Common myeloid progenitor, CD34-positive (primary cell): ENCODE measurements at regions of chr22 and their contacts with region 1.

Region 1: DNA sequence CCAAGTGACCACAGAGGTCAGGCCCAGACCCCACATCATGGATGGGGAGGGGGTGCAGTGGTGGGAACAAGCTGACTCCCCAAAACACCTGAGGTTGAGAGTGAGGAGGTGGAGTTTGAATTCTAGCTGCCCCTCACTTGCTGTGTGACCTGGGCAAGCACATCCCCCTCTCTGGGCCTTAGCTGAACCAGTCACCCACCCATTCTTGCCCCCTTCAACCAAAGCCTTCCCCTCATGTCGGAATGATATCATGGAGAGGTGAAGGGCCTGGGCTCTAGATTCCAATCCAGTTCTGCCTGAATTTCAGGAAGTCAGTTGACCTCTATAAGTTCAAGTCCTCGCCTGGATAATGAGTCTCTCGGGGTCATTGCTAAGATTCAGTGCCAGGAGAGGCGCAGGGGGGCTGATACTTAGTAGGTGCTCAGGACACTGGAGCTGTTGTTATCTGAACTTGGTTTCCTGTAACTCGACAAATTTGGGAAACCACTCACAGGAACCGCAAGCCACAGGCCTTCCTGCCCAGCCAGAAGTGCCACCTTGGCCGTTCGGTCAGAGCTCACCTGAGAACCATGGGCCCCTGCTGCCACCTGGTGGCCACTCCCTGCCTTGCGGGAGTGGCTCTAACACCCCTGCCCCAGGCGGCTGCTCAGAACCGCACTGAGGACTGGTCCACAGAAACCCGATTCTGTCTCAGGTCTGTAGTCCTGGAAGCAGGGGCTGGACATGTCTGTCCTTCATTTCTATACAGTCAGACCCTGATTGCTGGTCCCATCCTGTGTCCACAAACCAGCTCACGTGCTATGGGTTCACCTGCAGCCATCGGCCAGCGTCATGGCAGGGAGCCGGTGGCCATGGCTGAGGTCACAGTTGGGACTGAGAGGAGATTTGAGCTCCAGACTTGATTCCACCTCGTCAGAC is 6.9 kb downstream of the CDC42EP1 start:
- DNase-seq: peak; percentile 90 to 94 (median 93)
- H3K4me3 ChIP-seq: peak overlapping the region in 1 of 7 experiments; percentile 22
- H3K27ac ChIP-seq: no peak overlapping the region
- H3K4me1 ChIP-seq: peaks cover 5 to 28% (median 19%) of the 10 kb centered on the region in 4 experiments
- H3K27me3 ChIP-seq: peaks cover 0 to 32% (median 12%) of the 10 kb centered on the region in 5 experiments

Region 2: DNA sequence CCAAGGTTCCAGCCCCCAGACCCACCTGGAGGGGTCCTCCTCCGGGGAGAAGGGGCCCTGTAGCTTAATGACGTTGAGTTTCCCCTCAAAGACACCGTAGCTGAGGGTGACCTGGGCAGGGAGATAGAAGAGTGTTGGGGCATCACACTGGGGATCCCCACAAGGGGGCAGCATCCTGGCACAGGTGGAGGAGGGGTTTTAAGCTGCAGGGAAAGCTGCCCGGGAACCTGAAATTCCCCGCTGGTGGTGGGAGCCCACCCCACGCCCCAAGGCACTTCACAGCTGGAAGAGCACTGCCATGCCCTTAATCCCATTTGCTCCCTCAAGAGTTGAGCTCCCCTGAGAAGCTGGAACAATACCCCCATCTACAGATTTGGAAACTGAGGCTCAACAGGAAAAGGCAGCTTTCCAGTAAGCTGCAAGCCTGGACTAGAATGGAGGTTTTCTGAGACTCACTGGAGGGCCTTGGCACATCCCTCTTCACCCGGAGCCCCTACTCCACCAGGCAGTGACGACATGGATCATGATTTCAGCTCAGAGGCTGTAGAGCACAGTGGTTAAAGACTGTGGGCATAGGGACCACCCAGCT is 94.7 kb before region 1 on chr22:
- CTCF ChIA-PET with region 1: interaction called, 10 read pairs
- POLR2A ChIA-PET with region 1: no interaction called
- DNase-seq: peak in 2 of 3 donors; percentile 40 to 45
- H3K4me3 ChIP-seq: no peak overlapping the region
- H3K27ac ChIP-seq: no peak overlapping the region
- H3K4me1 ChIP-seq: no peaks in the 10 kb centered on the region
- H3K27me3 ChIP-seq: no peaks in the 10 kb centered on the region

Region 3: DNA sequence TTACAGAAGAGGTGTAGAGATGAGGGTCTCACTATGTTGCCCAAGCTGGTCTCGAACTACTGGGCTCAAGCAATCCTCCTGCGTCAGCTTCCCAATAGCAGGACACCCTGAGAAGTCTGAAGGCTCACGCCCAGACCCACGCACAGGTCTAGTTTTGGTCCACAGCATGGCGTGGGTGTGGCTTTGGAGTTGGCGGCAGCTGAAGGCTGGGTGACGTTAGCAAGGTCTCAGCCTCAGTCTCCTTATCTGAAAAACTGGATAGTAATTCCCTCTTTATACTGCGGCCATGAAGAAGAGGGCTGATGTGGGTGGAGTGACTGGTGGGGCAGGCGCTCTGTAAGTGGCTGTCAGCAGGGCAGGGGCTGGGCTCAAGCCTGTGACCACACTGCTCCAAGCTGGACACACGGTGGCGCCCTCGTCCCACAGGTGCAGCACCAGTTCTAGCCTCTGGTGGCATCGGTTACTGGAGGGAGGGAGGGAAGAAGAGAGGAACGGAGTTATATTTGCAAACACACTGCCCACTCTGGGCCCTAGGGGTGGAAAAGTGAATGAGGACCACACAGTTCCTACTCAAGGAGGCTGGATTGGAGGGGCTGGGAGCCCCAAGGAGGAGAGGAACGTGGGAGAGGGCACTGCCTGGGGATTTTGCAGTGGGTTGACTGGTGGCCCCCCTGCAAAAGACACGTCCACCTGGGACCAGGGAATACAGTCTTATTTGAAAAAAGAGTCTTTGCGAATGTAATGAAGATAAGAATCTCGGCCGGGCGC is 28.4 kb before region 1 on chr22:
- CTCF ChIA-PET with region 1: interaction called, 515 read pairs
- POLR2A ChIA-PET with region 1: interaction called, 3 read pairs
- DNase-seq: peak; percentile 91 to 97 (median 96)
- H3K4me3 ChIP-seq: peak overlapping the region in 1 of 7 experiments; percentile 38
- H3K27ac ChIP-seq: no peak overlapping the region
- H3K4me1 ChIP-seq: peaks cover 4 to 40% (median 28%) of the 10 kb centered on the region in 4 experiments
- H3K27me3 ChIP-seq: peaks cover 0 to 16% (median 6%) of the 10 kb centered on the region in 5 experiments

Region 4: GRCh38 chr22:37552524-37553163 is 14.5 kb before region 1 on chr22:
- CTCF ChIA-PET with region 1: interaction called, 515 read pairs
- POLR2A ChIA-PET with region 1: no interaction called
- DNase-seq: no peak
- H3K4me3 ChIP-seq: no peak overlapping the region
- H3K27ac ChIP-seq: no peak overlapping the region
- H3K4me1 ChIP-seq: peaks cover 0 to 4% (median 2%) of the 10 kb centered on the region in 4 experiments
- H3K27me3 ChIP-seq: peaks cover 3 to 24% (median 17%) of the 10 kb centered on the region in 5 experiments

Region 5: GRCh38 chr22:37581504-37581903 is 14.3 kb after region 1 on chr22:
- CTCF ChIA-PET with region 1: interaction called, 68 read pairs
- POLR2A ChIA-PET with region 1: interaction called, 6 read pairs
- DNase-seq: peak in 1 of 3 donors; percentile 36
- H3K4me3 ChIP-seq: no peak overlapping the region
- H3K27ac ChIP-seq: no peak overlapping the region
- H3K4me1 ChIP-seq: peaks cover 5 to 28% (median 24%) of the 10 kb centered on the region in 4 experiments
- H3K27me3 ChIP-seq: peaks cover 0 to 5% (median 0%) of the 10 kb centered on the region in 5 experiments

Region 6: GRCh38 chr22:37588546-37589215 is 21.5 kb after region 1 on chr22:
- CTCF ChIA-PET with region 1: interaction called, 68 read pairs
- POLR2A ChIA-PET with region 1: interaction called, 7 read pairs
- DNase-seq: no peak
- H3K4me3 ChIP-seq: no peak overlapping the region
- H3K27ac ChIP-seq: no peak overlapping the region
- H3K4me1 ChIP-seq: peaks cover 0 to 7% (median 3%) of the 10 kb centered on the region in 4 experiments
- H3K27me3 ChIP-seq: peaks cover 0 to 3% (median 0%) of the 10 kb centered on the region in 5 experiments

Region 7: DNA sequence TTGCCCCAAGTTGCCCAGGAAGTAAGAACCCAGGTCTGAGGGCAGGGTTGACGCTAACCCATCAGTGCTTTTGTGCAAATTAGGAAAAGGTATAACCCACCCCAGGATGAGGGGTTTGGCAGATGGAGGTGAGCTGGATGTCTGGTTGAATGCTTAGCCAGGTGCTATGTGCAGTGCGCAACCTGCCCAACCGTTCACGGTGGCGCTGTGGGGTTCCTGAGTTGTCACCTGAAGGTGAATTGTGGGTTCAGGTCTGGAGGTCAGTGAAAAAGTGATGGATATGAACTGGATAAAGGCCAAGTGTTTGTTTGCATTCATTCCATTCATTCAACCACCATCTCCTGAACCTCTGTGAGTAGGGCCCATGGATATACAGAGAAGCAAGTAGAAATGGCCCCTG is 27.1 kb after region 1 on chr22:
- CTCF ChIA-PET with region 1: interaction called, 68 read pairs
- POLR2A ChIA-PET with region 1: interaction called, 7 read pairs
- DNase-seq: no peak
- H3K4me3 ChIP-seq: no peak overlapping the region
- H3K27ac ChIP-seq: no peak overlapping the region
- H3K4me1 ChIP-seq: peaks cover 0 to 11% (median 4%) of the 10 kb centered on the region in 4 experiments
- H3K27me3 ChIP-seq: no peaks in the 10 kb centered on the region

Region 8: GRCh38 chr22:37618072-37618656 is 51.0 kb after region 1 on chr22:
- CTCF ChIA-PET with region 1: no interaction called
- POLR2A ChIA-PET with region 1: no interaction called
- DNase-seq: no peak
- H3K4me3 ChIP-seq: no peak overlapping the region
- H3K27ac ChIP-seq: no peak overlapping the region
- H3K4me1 ChIP-seq: peaks cover 0 to 5% (median 2%) of the 10 kb centered on the region in 4 experiments
- H3K27me3 ChIP-seq: no peaks in the 10 kb centered on the region

Region 9: GRCh38 chr22:37686002-37686982 is 119.1 kb after region 1 on chr22 and contains the start of gene NOL12:
- CTCF ChIA-PET with region 1: no interaction called
- POLR2A ChIA-PET with region 1: no interaction called
- DNase-seq: peak; percentile 88 to 91 (median 89)
- H3K4me3 ChIP-seq: peak within 1 kb of the TSS; percentile 81 to 98 (median 96)
- H3K27ac ChIP-seq: peak within 1 kb of the TSS; percentile 79 to 91
- H3K4me1 ChIP-seq: peaks cover 0 to 22% (median 20%) of the 10 kb centered on the region in 4 experiments
- H3K27me3 ChIP-seq: no peaks in the 10 kb centered on the region